Mammary epithelial cell (primary cell): ENCODE measurements at regions of chr18 and their contacts with region 1.

Region 1: GRCh38 chr18:76565238-76566180 is 70.5 kb upstream of the ZNF516 start:
- DNase-seq: peak; percentile 92
- H3K4me3 ChIP-seq: peak overlapping the region; percentile 34 to 54 (median 37)
- H3K27ac ChIP-seq: peak overlapping the region; percentile 92
- H3K4me1 ChIP-seq: peaks cover 36% of the 10 kb centered on the region
- H3K27me3 ChIP-seq: no peaks in the 10 kb centered on the region
- CTCF ChIP-seq: no peak

Region 2: GRCh38 chr18:76538846-76539245 is 26.7 kb before region 1 on chr18:
- CTCF ChIA-PET with region 1: no interaction called
- dilution Hi-C with region 1: no loop called
- in situ Hi-C with region 1: no loop called
- intact Hi-C with region 1: loop called (anchors 2 kb)
- DNase-seq: no peak
- H3K4me3 ChIP-seq: no peak overlapping the region
- H3K27ac ChIP-seq: no peak overlapping the region
- H3K4me1 ChIP-seq: no peaks in the 10 kb centered on the region
- H3K27me3 ChIP-seq: no peaks in the 10 kb centered on the region
- CTCF ChIP-seq: no peak

Region 3: GRCh38 chr18:76610933-76611749 is 45.6 kb after region 1 on chr18:
- CTCF ChIA-PET with region 1: no interaction called
- dilution Hi-C with region 1: no loop called
- in situ Hi-C with region 1: no loop called
- intact Hi-C with region 1: loop called (anchors 2 kb)
- DNase-seq: peak; percentile 69
- H3K4me3 ChIP-seq: peak overlapping the region; percentile 24 to 40 (median 37)
- H3K27ac ChIP-seq: peak overlapping the region; percentile 72
- H3K4me1 ChIP-seq: peaks cover 14% of the 10 kb centered on the region
- H3K27me3 ChIP-seq: no peaks in the 10 kb centered on the region
- CTCF ChIP-seq: no peak